ENCODE measurements at regions of chr1 and their contacts with region 1.

Region 1: DNA sequence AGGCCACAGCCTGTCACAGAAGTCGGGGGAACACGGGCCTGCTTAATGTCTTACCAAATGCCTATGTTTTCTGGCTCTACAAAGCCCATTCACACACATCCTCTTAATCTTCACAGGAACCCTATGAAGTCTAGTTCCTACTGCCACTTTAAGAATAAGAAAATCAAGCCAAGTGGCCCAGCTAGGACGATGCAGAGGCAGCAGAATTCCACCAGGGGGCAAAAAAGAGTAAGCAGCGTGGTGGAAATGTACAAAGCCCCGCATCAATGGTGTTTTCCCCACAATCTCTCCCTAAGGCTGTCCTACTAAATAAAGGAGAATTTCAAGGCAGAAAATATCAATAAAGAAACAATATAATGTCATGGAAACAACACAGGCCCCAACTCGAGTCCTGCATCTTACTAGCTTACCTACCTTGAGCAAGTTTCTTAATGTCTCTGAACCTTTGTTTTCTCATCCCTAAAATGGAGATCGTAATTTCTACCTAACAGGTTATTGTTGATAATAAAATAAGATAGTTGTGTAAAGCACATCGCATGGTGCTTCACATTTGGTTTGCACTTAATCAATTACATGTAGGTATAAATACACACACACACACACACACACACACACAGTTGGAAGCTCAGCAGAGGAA is 21.4 kb downstream of the SEC16B start:
- DNase-seq: peak; percentile 38
- H3K4me3 ChIP-seq: no peak overlapping the region
- H3K27ac ChIP-seq: no peak overlapping the region
- H3K4me1 ChIP-seq: no peaks in the 10 kb centered on the region
- H3K27me3 ChIP-seq: no peaks in the 10 kb centered on the region
- CTCF ChIP-seq: peak; percentile 58 to 78 (median 72)
- POLR2A ChIP-seq: no peak

Region 2: GRCh38 chr1:177181631-177182291 is 766.7 kb before region 1 on chr1:
- intact Hi-C with region 1: loop called (anchors 5 kb)
- DNase-seq: peak; percentile 6
- H3K4me3 ChIP-seq: no peak overlapping the region
- H3K27ac ChIP-seq: no peak overlapping the region
- H3K4me1 ChIP-seq: no peaks in the 10 kb centered on the region
- H3K27me3 ChIP-seq: peaks cover 3% of the 10 kb centered on the region
- CTCF ChIP-seq: peak; percentile 21 to 55 (median 48)
- POLR2A ChIP-seq: no peak

Measured in prostate gland (tissue), 2 donors.